ENCODE measurements at regions of chr17 and their contacts with region 1.

Region 1: DNA sequence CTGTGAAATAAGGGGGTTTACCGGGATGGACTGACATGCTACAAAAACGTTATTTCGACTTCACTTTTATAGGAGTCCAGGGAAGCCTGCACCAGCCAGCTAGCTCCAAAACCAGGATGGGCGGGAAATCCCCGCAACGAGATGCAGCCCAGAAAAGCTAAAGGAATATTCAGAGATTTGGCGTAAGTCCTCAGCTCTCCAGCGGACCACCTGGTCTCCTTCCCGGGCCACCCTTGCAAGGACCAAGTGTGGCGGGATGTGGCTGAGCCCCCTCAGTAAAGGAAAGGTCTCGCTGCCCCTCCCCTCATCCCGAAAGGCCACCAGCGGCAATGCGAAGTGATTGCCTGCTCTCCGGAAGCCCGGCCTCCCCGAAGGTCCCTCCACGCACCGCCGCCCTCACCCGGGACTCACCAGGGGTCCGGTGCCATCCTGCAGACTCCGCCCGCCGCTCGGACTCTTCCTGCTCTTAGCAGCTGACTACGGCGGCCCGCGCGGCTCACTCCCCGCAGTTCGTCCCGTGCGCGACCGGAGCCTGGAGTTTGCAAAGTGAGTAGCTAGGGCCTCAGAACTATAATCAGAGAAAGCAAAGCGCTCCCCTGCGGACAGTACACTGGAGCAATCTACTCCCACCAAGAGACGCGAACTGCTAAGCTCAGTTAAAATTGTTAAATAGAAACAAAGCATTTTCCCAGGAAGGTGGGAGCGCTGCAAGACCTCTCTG is at the start of gene STX8:
- DNase-seq: peak; percentile 41 to 87 (median 76)
- ATAC-seq: peak; percentile 72
- H3K4me3 ChIP-seq: peak within 1 kb of the TSS; percentile 86 to 97
- H3K4me3 Mint-ChIP-seq: peak within 1 kb of the TSS; percentile 98
- H3K27ac ChIP-seq: peak within 1 kb of the TSS; percentile 34 to 60
- H3K27ac Mint-ChIP-seq: peak within 1 kb of the TSS; percentile 89
- H3K4me1 ChIP-seq: peaks cover 16% of the 10 kb centered on the region
- H3K4me1 Mint-ChIP-seq: peaks cover 42% of the 10 kb centered on the region
- H3K27me3 ChIP-seq: no peaks in the 10 kb centered on the region
- H3K27me3 Mint-ChIP-seq: no peaks in the 10 kb centered on the region
- CTCF ChIP-seq: no peak
- total RNA-seq, gene STX8: 38.6 to 43.7 TPM

Region 2: DNA sequence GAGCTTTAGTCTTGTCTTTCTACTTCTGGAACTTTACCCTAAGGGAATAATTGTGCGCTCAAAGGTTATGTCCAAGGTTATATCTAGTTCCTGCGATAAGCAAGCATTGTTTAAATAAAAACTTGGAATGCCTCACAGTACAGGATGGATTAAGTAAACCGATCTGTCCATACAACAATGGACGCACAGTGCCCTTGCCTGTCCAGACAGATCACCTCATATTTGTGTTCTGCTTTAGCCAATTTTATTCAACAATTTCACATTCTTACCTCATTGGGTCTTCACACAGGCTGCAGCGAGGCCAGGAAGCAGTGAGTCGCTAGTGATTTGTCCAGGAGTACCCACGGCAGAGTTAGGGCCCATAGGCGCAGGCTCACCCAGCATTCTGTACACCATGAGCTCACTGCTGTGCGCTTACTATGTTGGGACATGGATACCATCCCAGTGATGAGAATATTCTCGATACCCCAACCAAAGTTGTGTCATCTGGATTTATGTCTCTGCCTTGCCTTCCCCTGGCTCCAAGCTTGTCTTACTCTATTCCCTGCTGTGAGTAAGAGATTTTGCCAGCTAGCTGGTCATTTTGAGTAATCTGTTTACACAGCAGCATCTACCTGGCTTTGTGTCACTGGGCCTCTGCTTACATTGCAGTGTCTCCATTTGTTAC is 109.5 kb after region 1 on chr17:
- CTCF ChIA-PET with region 1: no interaction called
- POLR2A ChIA-PET with region 1: no interaction called
- intact Hi-C with region 1: no loop called
- DNase-seq: no peak
- ATAC-seq: no peak
- H3K4me3 ChIP-seq: no peak overlapping the region
- H3K4me3 Mint-ChIP-seq: no peak overlapping the region
- H3K27ac ChIP-seq: no peak overlapping the region
- H3K27ac Mint-ChIP-seq: no peak overlapping the region
- H3K4me1 ChIP-seq: no peaks in the 10 kb centered on the region
- H3K4me1 Mint-ChIP-seq: no peaks in the 10 kb centered on the region
- H3K27me3 ChIP-seq: no peaks in the 10 kb centered on the region
- H3K27me3 Mint-ChIP-seq: no peaks in the 10 kb centered on the region
- CTCF ChIP-seq: no peak

Region 3: GRCh38 chr17:9768381-9768934 is 192.9 kb after region 1 on chr17:
- CTCF ChIA-PET with region 1: interaction called, 10 read pairs
- POLR2A ChIA-PET with region 1: no interaction called
- intact Hi-C with region 1: loop called in 1 of 2 experiments (anchors 2 kb)
- DNase-seq: peak in 2 of 9 experiments; percentile 18 to 46
- ATAC-seq: no peak
- H3K4me3 ChIP-seq: no peak overlapping the region
- H3K4me3 Mint-ChIP-seq: no peak overlapping the region
- H3K27ac ChIP-seq: no peak overlapping the region
- H3K27ac Mint-ChIP-seq: no peak overlapping the region
- H3K4me1 ChIP-seq: no peaks in the 10 kb centered on the region
- H3K4me1 Mint-ChIP-seq: no peaks in the 10 kb centered on the region
- H3K27me3 ChIP-seq: no peaks in the 10 kb centered on the region
- H3K27me3 Mint-ChIP-seq: peaks cover 14% of the 10 kb centered on the region
- CTCF ChIP-seq: peak; percentile 59

Measured in CD8-positive, alpha-beta T cell (primary cell).